ENCODE measurements at regions of chr11 and their contacts with region 1.

Region 1: GRCh38 chr11:13238879-13239514 is 38.6 kb upstream of the BMAL1 start:
- DNase-seq: peak; percentile 55 to 57
- ATAC-seq: peak; percentile 59 to 95; a peak in 4 of 6 replicates
- H3K4me3 ChIP-seq: no peak overlapping the region
- H3K27ac ChIP-seq: peak overlapping the region in 1 of 2 experiments; percentile 14; a peak in 3 of 6 replicates
- H3K4me1 ChIP-seq: 0 out of 3 replicates have a peak, but pooled peaks cover 2% of the 10 kb centered on the region
- CTCF ChIP-seq: peak; percentile 77
- EP300 ChIP-seq: no peak
- POLR2A ChIP-seq: no peak
- RAD21 ChIP-seq: peak; percentile 71 to 78

Region 2: DNA sequence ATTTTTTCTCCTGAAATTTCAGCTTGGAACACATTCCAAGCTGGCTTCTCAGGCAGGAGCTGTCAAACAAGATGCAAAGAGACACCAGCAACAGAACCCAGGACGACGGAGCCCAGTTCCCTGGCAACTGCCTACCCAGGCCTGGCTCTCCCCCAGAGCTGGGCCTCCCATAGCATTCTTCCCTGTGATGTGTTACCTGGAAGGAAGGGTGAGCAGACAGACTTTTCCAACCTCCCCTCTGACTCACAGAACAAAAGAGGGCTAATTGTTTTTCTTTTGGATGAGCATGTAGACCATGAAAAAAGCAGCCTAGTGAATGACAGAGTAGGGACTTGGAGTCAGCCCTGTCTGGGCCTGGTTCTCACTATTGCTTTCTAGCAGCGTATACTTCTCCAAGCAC is 16.7 kb before region 1 on chr11:
- CTCF ChIA-PET with region 1: interaction called, 77 read pairs
- POLR2A ChIA-PET with region 1: no interaction called
- DNase-seq: no peak
- ATAC-seq: peak in 1 of 2 experiments; percentile 37; a peak in 3 of 6 replicates
- H3K4me3 ChIP-seq: no peak overlapping the region
- H3K27ac ChIP-seq: peak overlapping the region in 1 of 2 experiments; percentile 63; a peak in 2 of 6 replicates
- H3K4me1 ChIP-seq: peaks cover 16% of the 10 kb centered on the region
- CTCF ChIP-seq: no peak
- EP300 ChIP-seq: no peak
- POLR2A ChIP-seq: no peak
- RAD21 ChIP-seq: no peak

Region 3: GRCh38 chr11:13249996-13250395 is 11.0 kb after region 1 on chr11:
- CTCF ChIA-PET with region 1: interaction called, 20 read pairs
- POLR2A ChIA-PET with region 1: no interaction called
- DNase-seq: peak in 1 of 2 experiments; percentile 27
- ATAC-seq: peak; percentile 75 to 82
- H3K4me3 ChIP-seq: no peak overlapping the region
- H3K27ac ChIP-seq: no peak overlapping the region
- H3K4me1 ChIP-seq: peaks cover 6% of the 10 kb centered on the region
- CTCF ChIP-seq: peak; percentile 52
- EP300 ChIP-seq: no peak
- POLR2A ChIP-seq: no peak
- RAD21 ChIP-seq: peak; percentile 66 to 70

Region 4: DNA sequence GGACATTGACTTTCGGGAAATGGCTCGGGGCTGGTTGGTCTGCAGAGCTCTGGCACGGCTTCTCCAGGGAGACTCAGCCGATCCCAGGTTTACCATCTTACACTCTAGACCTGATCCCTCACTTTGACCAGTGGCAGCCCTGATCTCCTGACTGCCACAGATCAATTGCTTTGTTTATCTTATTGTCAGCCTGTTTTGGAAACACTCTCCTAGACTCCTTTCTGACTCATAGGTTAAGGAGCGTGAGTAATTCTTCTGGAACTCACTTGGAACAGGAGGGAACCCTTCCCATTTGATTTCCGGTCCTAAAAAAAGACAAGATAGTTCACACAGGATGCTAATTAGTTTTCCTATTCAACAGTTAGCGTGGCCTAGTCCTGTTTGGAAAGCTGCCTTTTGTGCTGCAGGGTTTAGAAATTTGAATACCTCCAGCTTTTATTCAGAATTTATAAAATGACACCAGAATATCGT is 22.6 kb after region 1 on chr11:
- CTCF ChIA-PET with region 1: interaction called, 12 read pairs
- POLR2A ChIA-PET with region 1: no interaction called
- DNase-seq: peak; percentile 69 to 84
- ATAC-seq: peak; percentile 78 to 95
- H3K4me3 ChIP-seq: no peak overlapping the region
- H3K27ac ChIP-seq: peak overlapping the region; percentile 62 to 84
- H3K4me1 ChIP-seq: peaks cover 30% of the 10 kb centered on the region
- CTCF ChIP-seq: no peak
- EP300 ChIP-seq: no peak
- POLR2A ChIP-seq: no peak
- RAD21 ChIP-seq: no peak

Measured in A549 (cell line).